Psoas muscle (tissue), 8 donors: ENCODE measurements at regions of chr5 and their contacts with region 1.

Region 1: GRCh38 chr5:98773464-98774191 is at the start of gene RGMB:
- DNase-seq: peak; percentile 98 to 99
- ATAC-seq: peak; percentile 86 to 94 (median 92)
- H3K4me3 ChIP-seq: peak within 1 kb of the TSS; percentile 92
- H3K27ac ChIP-seq: peak within 1 kb of the TSS; percentile 97
- H3K4me1 ChIP-seq: peaks cover 36% of the 10 kb centered on the region
- H3K27me3 ChIP-seq: no peaks in the 10 kb centered on the region
- CTCF ChIP-seq: no peak
- total RNA-seq, gene RGMB: 14.1 to 25.7 (median 23.6) TPM

Region 2: GRCh38 chr5:97183100-97183929 is 1590.3 kb before region 1 on chr5 and contains the start of gene RIOK2:
- intact Hi-C with region 1: loop called in 1 of 2 experiments (anchors 5 kb)
- DNase-seq: peak; percentile 94 to 96
- ATAC-seq: peak; percentile 94 to 97 (median 96)
- H3K4me3 ChIP-seq: peak within 1 kb of the TSS; percentile 72
- H3K27ac ChIP-seq: peak within 1 kb of the TSS; percentile 94
- H3K4me1 ChIP-seq: peaks cover 29% of the 10 kb centered on the region
- H3K27me3 ChIP-seq: no peaks in the 10 kb centered on the region
- CTCF ChIP-seq: no peak
- total RNA-seq, gene RIOK2: 17.4 to 30.4 (median 21.0) TPM

Region 3: DNA sequence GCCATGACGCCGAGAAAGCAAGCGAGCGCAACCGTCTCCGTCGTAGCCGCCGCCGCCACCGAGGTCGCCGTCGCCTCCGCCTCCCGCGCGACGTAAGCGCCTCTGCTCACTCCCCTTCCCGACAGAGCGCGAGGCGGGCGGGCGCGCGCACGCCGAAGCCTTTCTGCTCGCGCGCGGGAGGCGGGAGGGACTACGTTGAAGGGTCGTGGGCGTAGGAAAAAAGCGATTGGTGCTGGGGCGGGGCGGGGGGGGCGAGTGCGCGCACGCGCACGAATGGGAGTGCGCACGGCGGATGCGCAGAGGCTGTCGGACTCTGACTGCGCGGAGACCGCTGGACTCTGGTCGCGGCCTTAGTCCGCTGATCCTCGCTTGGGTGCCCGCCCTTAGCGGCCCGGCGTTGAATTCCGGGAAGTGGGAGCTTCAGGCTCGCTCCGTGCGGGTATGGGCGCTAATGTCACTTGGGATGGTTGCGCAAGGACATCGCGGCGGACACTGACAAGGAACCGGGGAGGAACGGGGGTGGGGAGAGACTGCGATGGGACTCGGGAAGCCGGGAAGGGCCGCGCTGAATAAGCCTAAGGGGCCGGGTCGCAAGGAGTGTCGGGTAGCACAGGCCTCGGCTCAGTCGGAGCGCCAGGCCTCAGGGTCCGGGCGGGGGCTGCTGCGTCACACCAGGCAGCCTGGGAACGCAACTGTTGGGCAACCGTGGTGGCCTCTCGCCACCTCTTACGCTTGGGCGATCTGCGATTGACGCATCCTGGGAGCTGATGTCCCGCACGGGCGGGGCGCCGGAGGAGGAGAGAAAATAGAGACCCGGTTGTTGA is 155.5 kb after region 1 on chr5 and contains the start of gene CHD1:
- intact Hi-C with region 1: loop called in 1 of 2 experiments (anchors 10 kb)
- DNase-seq: peak; percentile 99 to 100
- ATAC-seq: peak; percentile 88 to 90 (median 88)
- H3K4me3 ChIP-seq: peak within 1 kb of the TSS; percentile 95
- H3K27ac ChIP-seq: peak within 1 kb of the TSS; percentile 100
- H3K4me1 ChIP-seq: peaks cover 56% of the 10 kb centered on the region
- H3K27me3 ChIP-seq: no peaks in the 10 kb centered on the region
- CTCF ChIP-seq: no peak
- total RNA-seq, gene CHD1: 9.5 to 30.4 (median 24.5) TPM